ENCODE measurements at regions of chr11 and their contacts with region 1.

Region 1: GRCh38 chr11:68213555-68214174 is 569 bp upstream of the KMT5B start:
- DNase-seq: peak; percentile 87
- H3K4me3 ChIP-seq: peak overlapping the region; percentile 49 to 84 (median 75)
- H3K27ac ChIP-seq: peak overlapping the region; percentile 88
- H3K4me1 ChIP-seq: peaks cover 17% of the 10 kb centered on the region
- H3K27me3 ChIP-seq: peaks cover 0 to 6% of the 10 kb centered on the region in 2 experiments
- CTCF ChIP-seq: no peak
- POLR2A ChIP-seq: peak; percentile 99

Region 2: DNA sequence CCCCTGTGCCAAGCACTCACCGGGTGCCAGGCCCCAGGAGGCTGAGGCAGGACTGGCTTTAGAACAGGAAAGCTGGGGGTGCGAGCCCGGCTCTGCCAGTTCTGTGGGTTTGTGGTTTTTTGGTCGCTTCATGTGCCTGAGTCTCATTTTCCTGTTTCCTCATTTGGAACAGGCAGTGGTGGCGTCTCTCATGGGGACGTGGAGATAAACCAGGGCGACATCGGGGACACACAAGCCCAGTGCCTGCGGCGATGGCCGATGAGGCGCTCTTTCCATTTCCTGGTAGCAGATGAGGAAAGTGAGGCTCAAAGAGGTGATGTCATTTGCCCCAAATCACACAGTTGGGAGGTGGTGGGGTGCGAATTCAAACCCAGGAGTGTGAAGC is 71.6 kb before region 1 on chr11:
- CTCF ChIA-PET with region 1: no interaction called
- POLR2A ChIA-PET with region 1: no interaction called
- dilution Hi-C with region 1: no loop called
- intact Hi-C with region 1: no loop called
- DNase-seq: no peak
- H3K4me3 ChIP-seq: no peak overlapping the region
- H3K27ac ChIP-seq: no peak overlapping the region
- H3K4me1 ChIP-seq: peaks cover 8% of the 10 kb centered on the region
- H3K27me3 ChIP-seq: no peaks in the 10 kb centered on the region
- CTCF ChIP-seq: no peak
- POLR2A ChIP-seq: no peak

Region 3: GRCh38 chr11:68199295-68199987 is 14.2 kb before region 1 on chr11:
- CTCF ChIA-PET with region 1: interaction called, 15 read pairs
- POLR2A ChIA-PET with region 1: no interaction called
- dilution Hi-C with region 1: no loop called
- intact Hi-C with region 1: no loop called
- DNase-seq: no peak
- H3K4me3 ChIP-seq: no peak overlapping the region
- H3K27ac ChIP-seq: no peak overlapping the region
- H3K4me1 ChIP-seq: no peaks in the 10 kb centered on the region
- H3K27me3 ChIP-seq: no peaks in the 10 kb centered on the region
- CTCF ChIP-seq: no peak
- POLR2A ChIP-seq: no peak

Region 4: GRCh38 chr11:68271781-68272608 is 58.3 kb after region 1 on chr11 and contains the start of gene C11orf24:
- CTCF ChIA-PET with region 1: no interaction called
- POLR2A ChIA-PET with region 1: no interaction called
- dilution Hi-C with region 1: no loop called
- intact Hi-C with region 1: loop called (anchors 2 kb)
- DNase-seq: peak; percentile 90
- H3K4me3 ChIP-seq: peak within 1 kb of the TSS; percentile 59 to 68 (median 60)
- H3K27ac ChIP-seq: peak within 1 kb of the TSS; percentile 71
- H3K4me1 ChIP-seq: peaks cover 7% of the 10 kb centered on the region
- H3K27me3 ChIP-seq: no peaks in the 10 kb centered on the region
- CTCF ChIP-seq: no peak
- POLR2A ChIP-seq: peak; percentile 77
- total RNA-seq, gene C11orf24: 26.4 and 28.4 TPM in 2 replicates

Measured in endothelial cell of umbilical vein (primary cell).